Transverse colon (tissue), 4 donors: ENCODE measurements at regions of chr20 and their contacts with region 1.

Region 1: DNA sequence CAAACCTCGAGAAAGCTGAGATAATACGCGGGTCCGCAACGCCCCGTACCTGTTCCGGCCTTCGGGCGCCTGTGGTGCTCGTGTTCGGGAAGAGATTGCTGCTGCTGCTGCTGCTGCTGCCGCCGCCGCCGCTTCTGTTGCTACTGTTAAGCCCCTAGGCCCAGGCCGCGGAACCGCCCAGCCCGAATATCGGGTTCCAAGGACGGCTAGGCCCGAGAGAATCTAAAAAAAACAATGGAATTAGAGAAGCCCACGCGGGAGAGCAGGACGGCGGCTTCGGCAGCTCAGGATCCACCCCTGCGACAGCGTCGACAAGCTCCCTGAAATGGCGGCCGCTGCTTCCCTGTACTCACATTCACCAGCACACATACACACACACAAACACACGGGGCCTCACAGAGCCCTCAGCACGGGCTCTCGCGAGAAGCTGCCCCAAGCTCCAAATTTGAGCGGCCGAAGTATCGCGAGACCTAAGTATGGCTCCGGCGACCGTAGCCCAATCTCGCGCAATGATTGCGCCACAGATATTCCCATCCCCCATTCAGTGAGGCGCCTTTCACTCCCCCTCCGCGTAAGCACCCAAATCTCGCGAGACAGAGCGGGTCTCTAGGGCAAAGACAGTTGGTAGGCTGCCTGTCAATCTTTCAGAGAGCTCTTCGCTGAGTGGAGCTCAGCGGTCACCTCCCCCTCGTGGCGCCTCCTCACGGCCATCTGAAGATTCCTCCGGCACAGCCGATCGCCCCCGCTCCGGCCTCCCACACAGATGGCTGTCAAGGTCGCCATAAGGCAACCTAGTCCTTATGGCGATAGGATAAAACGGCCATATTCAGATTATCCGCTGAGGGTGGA is at the start of gene RBM39:
- DNase-seq: peak; percentile 100
- H3K4me3 ChIP-seq: peak within 1 kb of the TSS; percentile 80 to 97 (median 83)
- H3K27ac ChIP-seq: peak within 1 kb of the TSS; percentile 98 to 100 (median 99)
- H3K4me1 ChIP-seq: peaks cover 13 to 42% (median 29%) of the 10 kb centered on the region in 4 donors
- H3K27me3 ChIP-seq: no peaks in the 10 kb centered on the region
- CTCF ChIP-seq: peak; percentile 29 to 55 (median 43)
- EP300 ChIP-seq: peak; percentile 30
- POLR2A ChIP-seq: peak; percentile 98
- total RNA-seq, gene RBM39: 264 to 721 (median 416) TPM

Region 2: GRCh38 chr20:35816339-35816738 is 74.2 kb after region 1 on chr20:
- in situ Hi-C with region 1: no loop called
- intact Hi-C with region 1: no loop called
- DNase-seq: no peak
- H3K4me3 ChIP-seq: no peak overlapping the region
- H3K27ac ChIP-seq: no peak overlapping the region
- H3K4me1 ChIP-seq: peaks cover 0 to 21% (median 9%) of the 10 kb centered on the region in 4 donors
- H3K27me3 ChIP-seq: no peaks in the 10 kb centered on the region
- CTCF ChIP-seq: no peak
- EP300 ChIP-seq: no peak
- POLR2A ChIP-seq: no peak

Region 3: DNA sequence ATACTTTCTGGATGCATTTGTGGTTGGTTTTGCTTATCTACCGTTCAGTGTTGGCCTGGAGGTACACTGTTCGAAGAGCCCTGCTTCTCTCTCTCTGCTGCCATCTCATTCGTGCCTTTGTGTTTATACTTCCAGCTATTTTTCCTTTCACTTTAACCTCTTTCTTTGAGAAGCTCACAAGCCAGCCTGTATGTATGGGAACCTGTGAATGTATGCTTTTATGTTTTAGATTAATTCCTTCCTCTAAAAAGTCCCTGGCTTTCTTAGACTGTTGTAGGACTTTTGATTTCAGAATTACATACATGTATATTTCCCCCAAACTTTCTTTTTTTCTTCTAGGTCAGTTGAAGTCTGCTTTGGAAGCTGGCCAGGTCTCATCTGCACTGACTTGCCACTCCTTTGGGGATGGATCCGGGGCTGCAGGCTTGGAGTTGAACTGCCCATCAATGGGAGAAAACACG is 129.2 kb after region 1 on chr20:
- in situ Hi-C with region 1: no loop called
- intact Hi-C with region 1: loop called (anchors 10 kb)
- DNase-seq: peak; percentile 11
- H3K4me3 ChIP-seq: no peak overlapping the region
- H3K27ac ChIP-seq: peak overlapping the region; percentile 21 to 61 (median 46)
- H3K4me1 ChIP-seq: peaks cover 0 to 5% (median 3%) of the 10 kb centered on the region in 4 donors
- H3K27me3 ChIP-seq: no peaks in the 10 kb centered on the region
- CTCF ChIP-seq: no peak
- EP300 ChIP-seq: no peak
- POLR2A ChIP-seq: no peak